ENCODE measurements at regions of chr7 and their contacts with region 1.

Region 1: GRCh38 chr7:55534175-55534915 is 38.0 kb downstream of the VOPP1 start:
- DNase-seq: peak; percentile 75
- H3K4me3 Mint-ChIP-seq: peak overlapping the region; percentile 68
- H3K27ac Mint-ChIP-seq: peak overlapping the region; percentile 96
- H3K4me1 Mint-ChIP-seq: peaks cover 79% of the 10 kb centered on the region
- H3K27me3 Mint-ChIP-seq: no peaks in the 10 kb centered on the region

Region 2: DNA sequence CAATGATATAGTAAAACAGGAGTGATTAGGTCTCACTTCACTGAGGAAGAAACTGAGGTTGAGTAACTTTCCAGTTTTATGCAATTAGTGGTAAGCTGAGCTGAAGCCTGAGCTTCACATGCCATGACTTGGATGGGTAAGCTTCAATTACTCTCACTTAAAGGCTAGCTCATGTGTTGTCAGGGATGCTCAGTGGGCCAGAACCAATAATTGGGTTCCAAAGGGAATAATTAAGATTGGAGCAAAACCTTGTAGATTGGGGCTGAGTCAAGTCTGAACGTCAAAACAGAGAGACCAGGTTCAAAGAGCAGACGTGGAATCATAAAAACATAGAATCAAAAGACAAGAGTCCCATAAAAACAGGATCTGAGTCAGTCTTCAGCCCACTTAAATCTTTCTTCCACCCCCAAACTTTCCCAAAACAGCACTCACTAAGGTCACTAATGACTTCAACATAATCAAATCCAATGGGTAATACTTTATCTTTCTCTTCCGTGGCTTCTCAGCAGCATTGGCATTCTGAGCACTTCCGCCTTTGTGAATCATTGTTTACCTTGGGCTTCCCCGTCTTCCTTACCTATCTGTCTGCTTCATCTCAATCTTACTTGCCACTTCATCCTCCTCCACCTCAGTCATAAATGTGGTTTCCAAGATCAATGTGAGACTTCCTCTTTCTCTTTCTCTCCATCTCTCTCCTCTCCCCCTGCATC is 538.6 kb before region 1 on chr7:
- intact Hi-C with region 1: loop called (anchors 10 kb)
- DNase-seq: peak; percentile 17
- H3K4me3 Mint-ChIP-seq: peak overlapping the region; percentile 3
- H3K27ac Mint-ChIP-seq: peak overlapping the region; percentile 78
- H3K4me1 Mint-ChIP-seq: peaks cover 28% of the 10 kb centered on the region
- H3K27me3 Mint-ChIP-seq: peaks cover 12% of the 10 kb centered on the region

Region 3: DNA sequence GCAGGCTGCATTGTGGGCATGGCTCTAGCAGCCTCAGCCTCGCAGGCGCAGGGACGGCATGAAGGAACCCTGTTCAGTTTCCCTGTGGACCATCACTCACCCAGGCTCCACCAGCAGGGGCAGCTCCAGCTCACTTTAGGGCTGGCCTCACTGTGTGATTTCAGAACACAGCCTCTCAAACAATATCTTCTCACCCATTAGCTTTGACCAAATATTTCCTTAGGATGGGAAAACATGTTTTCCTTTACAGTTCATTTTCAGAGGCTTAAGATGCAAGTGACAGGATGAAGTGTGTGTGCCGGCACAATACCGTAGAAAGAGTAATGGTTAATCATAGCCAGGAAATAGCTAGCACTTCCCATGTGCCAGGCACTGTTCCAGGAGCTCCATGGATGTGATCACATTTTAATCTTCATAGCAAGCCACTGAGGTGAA is 111.1 kb before region 1 on chr7:
- intact Hi-C with region 1: loop called (anchors 5 kb)
- DNase-seq: no peak
- H3K4me3 Mint-ChIP-seq: no peak overlapping the region
- H3K27ac Mint-ChIP-seq: no peak overlapping the region
- H3K4me1 Mint-ChIP-seq: peaks cover 6% of the 10 kb centered on the region
- H3K27me3 Mint-ChIP-seq: no peaks in the 10 kb centered on the region

Region 4: GRCh38 chr7:55515569-55516279 is 18.6 kb before region 1 on chr7:
- intact Hi-C with region 1: loop called (anchors 2 kb)
- DNase-seq: no peak
- H3K4me3 Mint-ChIP-seq: no peak overlapping the region
- H3K27ac Mint-ChIP-seq: no peak overlapping the region
- H3K4me1 Mint-ChIP-seq: peaks cover 33% of the 10 kb centered on the region
- H3K27me3 Mint-ChIP-seq: no peaks in the 10 kb centered on the region

Region 5: GRCh38 chr7:55572378-55573233 is 38.3 kb after region 1 on chr7 and contains the start of gene VOPP1:
- intact Hi-C with region 1: loop called (anchors 1 kb)
- DNase-seq: peak; percentile 50
- H3K4me3 Mint-ChIP-seq: peak within 1 kb of the TSS; percentile 87
- H3K27ac Mint-ChIP-seq: peak within 1 kb of the TSS; percentile 90
- H3K4me1 Mint-ChIP-seq: peaks cover 51% of the 10 kb centered on the region
- H3K27me3 Mint-ChIP-seq: no peaks in the 10 kb centered on the region
- total RNA-seq, gene VOPP1: 53.7 and 56.0 TPM in 2 replicates